Activated B cell treated with CpG ODN at 0.5 μM for 24 hours (primary cell): ENCODE measurements at regions of chr3 and their contacts with region 1.

Region 1: DNA sequence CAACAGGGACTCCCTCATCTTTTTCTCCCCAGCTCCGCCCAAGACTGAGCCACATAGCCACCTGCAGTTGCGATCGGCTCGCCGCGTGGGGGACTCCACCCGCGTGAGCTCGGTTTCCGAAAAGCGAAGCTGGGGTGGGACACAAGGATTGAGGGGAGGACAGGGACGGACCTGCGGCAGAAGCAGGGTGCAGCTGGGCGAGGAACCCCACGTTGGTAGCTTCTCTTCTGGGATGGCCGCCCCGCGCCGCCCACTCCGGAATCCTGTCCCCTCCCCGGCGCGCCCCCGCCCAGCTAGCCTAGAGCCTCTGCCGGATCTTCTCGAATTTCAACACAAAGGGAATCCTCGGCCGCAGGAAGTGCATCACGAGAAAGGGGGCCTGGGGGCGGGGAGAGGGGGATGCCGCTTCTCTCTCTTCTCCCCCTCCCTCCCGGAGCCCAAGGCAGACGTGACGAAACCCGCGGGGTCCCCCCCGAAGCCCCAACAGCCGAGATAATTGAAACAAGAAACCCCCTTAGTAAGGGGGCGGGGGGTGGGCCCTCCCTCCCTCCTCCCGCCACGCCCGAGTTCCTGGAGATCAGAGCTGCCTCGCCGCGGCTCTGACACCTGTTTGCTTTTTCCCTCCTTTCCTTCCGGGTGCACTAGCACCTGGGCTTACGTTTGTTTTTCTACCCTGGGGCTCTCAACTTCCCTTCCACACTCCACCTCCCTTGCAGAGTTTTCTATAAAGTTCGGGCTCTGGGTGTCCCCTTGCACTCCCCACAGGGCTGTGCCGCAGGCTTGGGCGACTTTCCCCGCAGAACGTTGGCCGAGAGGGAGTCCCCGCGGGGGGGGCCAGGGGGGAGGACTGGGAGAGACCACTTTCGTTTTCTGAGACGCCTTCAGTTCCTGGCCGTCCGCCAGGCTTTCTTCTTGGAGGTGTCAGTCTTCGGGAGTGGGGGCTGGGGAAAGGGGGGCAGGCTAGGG is 1.3 kb upstream of the KCNH8 start:
- DNase-seq: peak; percentile 64
- ATAC-seq: peak; percentile 73
- H3K4me3 Mint-ChIP-seq: peak overlapping the region; percentile 95
- H3K27ac Mint-ChIP-seq: peak overlapping the region; percentile 85
- H3K4me1 Mint-ChIP-seq: peaks cover 14% of the 10 kb centered on the region
- H3K27me3 Mint-ChIP-seq: peaks cover 9% of the 10 kb centered on the region
- CTCF ChIP-seq: no peak

Region 2: DNA sequence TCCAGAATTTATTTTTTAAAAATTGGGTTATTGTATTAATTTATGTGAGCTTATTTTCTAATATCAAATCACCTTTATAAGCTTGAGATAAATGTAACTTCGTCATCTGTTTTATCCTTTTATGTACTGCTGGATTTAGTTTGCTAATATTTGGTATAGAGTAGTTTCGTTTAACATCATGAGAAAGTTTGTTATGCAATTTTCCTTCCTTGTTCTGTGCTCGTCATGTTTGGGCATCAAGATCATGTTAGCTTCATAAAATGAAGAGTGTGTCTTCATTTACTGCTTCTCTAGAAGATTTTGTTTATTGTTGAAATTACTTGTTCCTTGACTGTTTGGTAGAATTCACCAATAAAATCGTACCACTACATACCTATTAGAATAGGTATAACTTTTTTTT is 459.7 kb before region 1 on chr3:
- CTCF ChIA-PET with region 1: no interaction called
- POLR2A ChIA-PET with region 1: no interaction called
- intact Hi-C with region 1: no loop called
- DNase-seq: no peak
- ATAC-seq: no peak
- H3K4me3 Mint-ChIP-seq: no peak overlapping the region
- H3K27ac Mint-ChIP-seq: no peak overlapping the region
- H3K4me1 Mint-ChIP-seq: no peaks in the 10 kb centered on the region
- H3K27me3 Mint-ChIP-seq: no peaks in the 10 kb centered on the region
- CTCF ChIP-seq: no peak

Region 3: GRCh38 chr3:19213601-19214220 is 66.7 kb after region 1 on chr3:
- CTCF ChIA-PET with region 1: interaction called, 3 read pairs
- POLR2A ChIA-PET with region 1: no interaction called
- intact Hi-C with region 1: loop called (anchors 5 kb)
- DNase-seq: no peak
- ATAC-seq: peak; percentile 74
- H3K4me3 Mint-ChIP-seq: no peak overlapping the region
- H3K27ac Mint-ChIP-seq: no peak overlapping the region
- H3K4me1 Mint-ChIP-seq: peaks cover 4% of the 10 kb centered on the region
- H3K27me3 Mint-ChIP-seq: no peaks in the 10 kb centered on the region
- CTCF ChIP-seq: no peak

Region 4: DNA sequence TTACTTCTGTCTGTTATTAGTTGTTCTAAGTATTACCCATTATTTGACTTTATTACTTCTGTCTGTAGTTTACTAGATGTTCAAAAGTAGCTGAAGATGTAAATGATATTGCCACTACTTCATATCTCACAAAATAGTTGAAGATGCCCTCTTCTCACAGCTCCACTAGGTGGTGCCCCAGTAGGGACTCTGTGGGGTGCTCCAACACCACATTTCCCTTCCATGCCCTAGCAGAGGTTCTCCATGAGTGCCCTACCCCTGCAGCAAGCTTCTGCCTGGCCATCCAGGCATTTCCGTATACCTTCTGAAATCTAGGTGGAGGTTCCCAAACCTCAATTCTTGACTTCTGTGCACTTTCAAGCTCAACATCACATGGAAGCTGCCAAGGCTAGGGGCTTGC is 82.1 kb after region 1 on chr3:
- CTCF ChIA-PET with region 1: no interaction called
- POLR2A ChIA-PET with region 1: no interaction called
- intact Hi-C with region 1: loop called (anchors 2 kb)
- DNase-seq: no peak
- ATAC-seq: no peak
- H3K4me3 Mint-ChIP-seq: no peak overlapping the region
- H3K27ac Mint-ChIP-seq: peak overlapping the region; percentile 93
- H3K4me1 Mint-ChIP-seq: peaks cover 23% of the 10 kb centered on the region
- H3K27me3 Mint-ChIP-seq: no peaks in the 10 kb centered on the region
- CTCF ChIP-seq: no peak

Region 5: GRCh38 chr3:19531426-19531825 is 384.5 kb after region 1 on chr3:
- CTCF ChIA-PET with region 1: no interaction called
- POLR2A ChIA-PET with region 1: no interaction called
- intact Hi-C with region 1: no loop called
- DNase-seq: no peak
- ATAC-seq: no peak
- H3K4me3 Mint-ChIP-seq: no peak overlapping the region
- H3K27ac Mint-ChIP-seq: peak overlapping the region; percentile 43
- H3K4me1 Mint-ChIP-seq: peaks cover 53% of the 10 kb centered on the region
- H3K27me3 Mint-ChIP-seq: no peaks in the 10 kb centered on the region
- CTCF ChIP-seq: no peak

Region 6: GRCh38 chr3:19739504-19739903 is 592.5 kb after region 1 on chr3:
- CTCF ChIA-PET with region 1: no interaction called
- POLR2A ChIA-PET with region 1: no interaction called
- intact Hi-C with region 1: no loop called
- DNase-seq: no peak
- ATAC-seq: no peak
- H3K4me3 Mint-ChIP-seq: no peak overlapping the region
- H3K27ac Mint-ChIP-seq: no peak overlapping the region
- H3K4me1 Mint-ChIP-seq: no peaks in the 10 kb centered on the region
- H3K27me3 Mint-ChIP-seq: peaks cover 10% of the 10 kb centered on the region
- CTCF ChIP-seq: no peak

Region 7: DNA sequence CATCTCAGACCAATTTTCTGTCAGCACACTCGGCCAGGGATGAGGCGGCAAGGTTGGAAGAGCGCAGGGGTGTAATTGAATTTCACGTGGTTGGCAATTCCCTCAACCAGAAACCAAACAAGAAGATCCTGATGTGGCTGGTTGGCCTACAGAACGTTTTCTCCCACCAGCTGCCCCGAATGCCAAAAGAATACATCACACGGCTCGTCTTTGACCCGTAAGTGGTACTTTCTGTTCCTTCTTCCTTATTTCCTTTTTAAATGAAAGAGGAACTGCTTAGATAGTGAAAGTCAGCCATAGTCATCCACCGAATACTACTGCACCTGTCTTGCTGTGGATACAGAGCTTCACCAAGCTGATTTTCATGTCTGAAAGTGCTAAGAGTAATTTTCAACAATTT is 978.9 kb after region 1 on chr3:
- CTCF ChIA-PET with region 1: no interaction called
- POLR2A ChIA-PET with region 1: no interaction called
- intact Hi-C with region 1: loop called (anchors 1 kb)
- DNase-seq: peak; percentile 39
- ATAC-seq: peak; percentile 95
- H3K4me3 Mint-ChIP-seq: peak overlapping the region; percentile 58
- H3K27ac Mint-ChIP-seq: peak overlapping the region; percentile 87
- H3K4me1 Mint-ChIP-seq: peaks cover 38% of the 10 kb centered on the region
- H3K27me3 Mint-ChIP-seq: no peaks in the 10 kb centered on the region
- CTCF ChIP-seq: no peak